PC-9 (cell line): ENCODE measurements at regions of chr1 and their contacts with region 1.

Region 1: DNA sequence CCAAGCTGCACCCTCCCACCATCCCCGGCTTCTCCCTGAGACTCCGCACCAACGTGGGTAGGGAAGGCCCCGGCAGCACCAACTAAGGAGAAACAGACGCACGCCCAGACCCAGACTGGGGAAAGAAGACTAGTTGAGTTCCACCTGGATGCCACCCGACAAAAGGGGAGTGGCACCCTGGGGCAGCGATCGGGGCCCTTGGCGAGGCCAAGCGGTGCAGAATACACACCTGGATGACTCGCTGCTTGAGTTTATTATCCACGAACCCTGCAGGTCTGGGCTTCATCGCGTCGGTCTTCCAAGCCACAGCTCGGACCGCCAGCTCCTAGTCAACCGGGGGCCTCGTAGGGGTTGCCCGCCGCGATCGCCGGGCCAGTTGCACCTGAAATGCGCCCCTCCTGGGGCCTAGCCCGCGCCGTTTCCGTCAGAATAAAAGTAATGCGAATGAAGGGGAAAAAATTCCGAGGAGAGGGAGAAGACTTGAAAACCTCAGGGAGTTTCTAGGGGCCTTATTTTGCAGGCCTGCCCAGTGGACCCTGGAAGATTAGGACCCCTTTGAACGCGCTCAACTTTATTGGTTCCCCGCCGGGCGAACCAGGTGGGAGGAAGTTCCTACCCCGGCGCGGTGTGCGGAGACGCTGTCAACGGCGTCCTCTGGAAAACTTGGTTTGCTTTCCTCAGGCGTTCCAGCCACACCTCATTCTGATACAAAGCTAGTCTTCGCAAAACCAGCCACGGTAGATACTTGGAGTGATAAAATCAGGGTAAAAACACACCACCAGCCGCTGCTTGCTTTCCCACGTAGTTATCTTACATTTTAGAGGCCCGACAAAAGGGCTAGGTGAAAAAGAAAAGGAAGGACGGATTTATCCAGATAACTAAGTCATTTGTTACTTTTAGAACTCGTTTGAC is at the start of gene NVL:
- DNase-seq: peak; percentile 84 to 91
- H3K4me3 ChIP-seq: peak within 1 kb of the TSS; percentile 87
- H3K27ac ChIP-seq: peak within 1 kb of the TSS; percentile 78
- H3K4me1 ChIP-seq: peaks cover 16% of the 10 kb centered on the region
- H3K27me3 ChIP-seq: no peaks in the 10 kb centered on the region
- CTCF ChIP-seq: no peak
- total RNA-seq, gene NVL: 27.3 and 36.1 TPM in 2 replicates

Region 2: GRCh38 chr1:224168859-224169380 is 161.2 kb before region 1 on chr1:
- CTCF ChIA-PET with region 1: no interaction called
- POLR2A ChIA-PET with region 1: interaction called, 5 read pairs
- intact Hi-C with region 1: loop called (anchors 5 kb)
- DNase-seq: peak; percentile 56 to 79
- H3K4me3 ChIP-seq: no peak overlapping the region
- H3K27ac ChIP-seq: peak overlapping the region; percentile 46
- H3K4me1 ChIP-seq: peaks cover 23% of the 10 kb centered on the region
- H3K27me3 ChIP-seq: no peaks in the 10 kb centered on the region
- CTCF ChIP-seq: no peak

Region 3: DNA sequence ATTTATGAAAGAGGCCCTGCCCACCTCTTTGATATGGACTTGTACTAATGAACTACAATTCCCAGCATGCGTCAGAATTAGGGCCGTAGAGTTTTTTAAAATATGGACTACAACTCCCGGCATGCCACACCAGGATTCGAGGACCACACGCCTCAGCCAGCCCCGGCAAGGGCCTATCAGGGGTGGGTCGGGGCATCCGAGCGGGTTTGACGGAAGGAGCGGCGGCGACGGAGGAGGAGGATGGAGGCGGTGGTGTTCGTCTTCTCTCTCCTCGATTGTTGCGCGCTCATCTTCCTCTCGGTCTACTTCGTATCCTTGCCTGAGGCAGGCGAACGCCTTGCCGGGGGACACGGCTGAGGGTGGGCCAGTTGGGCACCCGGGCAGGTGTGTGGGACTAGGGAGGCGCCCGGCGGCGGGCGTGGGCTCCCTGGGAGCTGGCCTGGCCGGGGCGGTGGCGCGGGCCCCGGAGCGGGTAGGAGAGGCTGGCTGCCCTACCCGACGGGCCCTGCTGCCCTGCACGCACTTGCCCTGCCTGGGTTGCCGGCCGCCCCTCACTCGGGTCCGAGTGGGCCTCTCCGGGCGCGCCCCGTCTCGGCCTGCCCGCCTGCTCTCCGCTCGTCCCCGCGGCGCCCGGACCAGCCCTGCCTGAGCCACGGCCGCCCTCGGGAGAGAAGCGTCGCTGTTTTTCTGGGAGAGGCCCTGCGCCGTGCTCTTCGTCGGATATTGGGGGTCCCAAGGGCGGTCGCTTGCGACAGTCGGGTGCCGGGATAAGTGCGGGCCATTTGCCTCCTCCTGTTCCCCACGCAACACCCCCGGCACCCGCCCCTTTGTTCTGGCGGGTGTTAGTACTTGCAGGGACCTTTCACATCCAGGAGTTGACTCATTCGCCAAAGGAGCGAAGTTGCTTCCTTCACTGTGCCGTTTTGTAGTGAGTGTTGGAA is 26.9 kb after region 1 on chr1 and contains the start of gene CNIH4:
- CTCF ChIA-PET with region 1: no interaction called
- POLR2A ChIA-PET with region 1: no interaction called
- intact Hi-C with region 1: loop called (anchors 1 kb)
- DNase-seq: peak; percentile 92
- H3K4me3 ChIP-seq: peak within 1 kb of the TSS; percentile 64
- H3K27ac ChIP-seq: peak within 1 kb of the TSS; percentile 47
- H3K4me1 ChIP-seq: peaks cover 14% of the 10 kb centered on the region
- H3K27me3 ChIP-seq: no peaks in the 10 kb centered on the region
- CTCF ChIP-seq: no peak
- total RNA-seq, gene CNIH4: 86.2 and 93.8 TPM in 2 replicates